CD4-positive, alpha-beta memory T cell (primary cell): ENCODE measurements at regions of chr6 and their contacts with region 1.

Region 1: DNA sequence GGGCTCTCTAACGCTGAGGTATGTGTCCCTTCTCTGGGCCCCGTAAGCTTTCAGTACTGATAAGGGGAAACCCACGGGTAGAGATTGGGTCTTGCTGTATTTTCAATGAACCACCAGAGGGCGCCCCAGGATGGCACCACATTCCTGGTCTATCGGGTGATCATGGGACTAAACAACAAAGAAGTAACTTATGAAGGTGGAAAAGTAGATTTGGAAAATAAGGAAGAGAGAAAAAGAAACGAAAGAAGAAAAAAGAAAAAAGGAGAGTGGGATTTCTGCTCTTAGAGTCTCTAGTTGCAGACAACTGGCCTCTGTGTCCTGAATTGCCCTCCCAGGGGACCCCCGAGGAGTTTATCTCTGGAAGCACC is 93.8 kb downstream of the GMPR start:
- DNase-seq: peak; percentile 77 to 86 (median 79)
- H3K4me3 ChIP-seq: no peak overlapping the region
- H3K4me3 Mint-ChIP-seq: no peak overlapping the region
- H3K27ac ChIP-seq: peak overlapping the region; percentile 50
- H3K27ac Mint-ChIP-seq: no peak overlapping the region
- H3K4me1 ChIP-seq: peaks cover 18% of the 10 kb centered on the region
- H3K4me1 Mint-ChIP-seq: peaks cover 0 to 20% (median 8%) of the 10 kb centered on the region in 4 donors
- H3K27me3 ChIP-seq: no peaks in the 10 kb centered on the region
- H3K27me3 Mint-ChIP-seq: no peaks in the 10 kb centered on the region

Region 2: GRCh38 chr6:16409531-16410441 is 77.6 kb after region 1 on chr6:
- CTCF ChIA-PET with region 1: interaction called, 21 read pairs
- POLR2A ChIA-PET with region 1: interaction called, 3 read pairs
- intact Hi-C with region 1: loop called (anchors 1 kb)
- DNase-seq: peak; percentile 45 to 78 (median 54)
- H3K4me3 ChIP-seq: no peak overlapping the region
- H3K4me3 Mint-ChIP-seq: peak overlapping the region in 7 of 8 donors; percentile 49 to 71 (median 68)
- H3K27ac ChIP-seq: no peak overlapping the region
- H3K27ac Mint-ChIP-seq: peak overlapping the region in 6 of 7 donors; percentile 7 to 78 (median 68)
- H3K4me1 ChIP-seq: peaks cover 22% of the 10 kb centered on the region
- H3K4me1 Mint-ChIP-seq: peaks cover 33 to 61% (median 48%) of the 10 kb centered on the region in 4 donors
- H3K27me3 ChIP-seq: no peaks in the 10 kb centered on the region
- H3K27me3 Mint-ChIP-seq: no peaks in the 10 kb centered on the region

Region 3: DNA sequence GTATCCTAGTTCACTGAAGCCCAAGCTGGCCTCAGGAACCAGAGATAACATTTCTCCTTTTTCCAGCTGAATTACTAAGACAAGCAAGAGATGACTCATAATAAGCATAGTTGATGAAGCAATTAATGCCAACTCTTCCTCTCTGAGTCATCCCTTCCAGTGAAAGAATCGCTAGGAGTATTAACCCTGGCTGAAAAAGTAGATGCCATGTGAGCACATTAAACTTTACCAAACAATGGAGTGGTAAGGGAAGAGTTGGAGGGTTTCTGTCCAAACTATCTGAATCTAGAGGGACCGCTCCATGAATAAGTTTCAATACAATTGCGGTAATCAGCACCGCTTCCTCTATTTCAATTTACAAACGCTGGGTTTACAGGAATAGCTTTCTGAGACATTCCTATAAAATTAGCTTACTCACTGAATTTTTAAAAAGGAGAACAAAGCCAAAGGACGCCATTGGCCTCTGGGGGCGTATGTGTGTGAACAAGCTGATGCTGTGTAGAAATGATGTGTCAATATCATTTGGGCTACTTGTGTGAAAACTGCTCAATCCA is 380.8 kb after region 1 on chr6:
- CTCF ChIA-PET with region 1: interaction called, 8 read pairs
- POLR2A ChIA-PET with region 1: no interaction called
- intact Hi-C with region 1: loop called (anchors 1 kb)
- DNase-seq: peak in 1 of 5 donors; percentile 62
- H3K4me3 ChIP-seq: peak overlapping the region; percentile 33 to 45
- H3K4me3 Mint-ChIP-seq: peak overlapping the region; percentile 70 to 89 (median 80)
- H3K27ac ChIP-seq: peak overlapping the region; percentile 67
- H3K27ac Mint-ChIP-seq: peak overlapping the region; percentile 74 to 95 (median 88)
- H3K4me1 ChIP-seq: peaks cover 36% of the 10 kb centered on the region
- H3K4me1 Mint-ChIP-seq: peaks cover 31 to 54% (median 43%) of the 10 kb centered on the region in 4 donors
- H3K27me3 ChIP-seq: no peaks in the 10 kb centered on the region
- H3K27me3 Mint-ChIP-seq: no peaks in the 10 kb centered on the region

Region 4: DNA sequence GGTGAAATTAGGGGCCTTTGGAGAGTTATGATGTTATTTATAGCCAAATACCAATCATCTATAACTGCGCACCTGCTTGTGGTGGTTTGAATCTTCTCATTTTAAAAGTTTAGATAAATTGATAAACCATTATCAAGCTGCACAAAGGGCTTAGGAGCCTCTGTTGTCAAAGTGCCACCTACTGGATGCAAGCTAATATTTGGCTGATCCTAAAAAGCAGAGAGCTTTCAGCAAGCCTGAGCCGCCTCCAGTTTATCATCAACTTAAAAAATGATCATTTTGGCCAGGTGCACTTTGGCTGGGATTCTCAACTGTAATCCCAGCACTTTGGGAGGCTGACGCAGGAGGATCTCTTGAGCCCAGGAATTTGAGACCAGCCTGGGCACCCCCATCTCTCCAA is 487.6 kb after region 1 on chr6:
- CTCF ChIA-PET with region 1: interaction called, 5 read pairs
- POLR2A ChIA-PET with region 1: no interaction called
- intact Hi-C with region 1: loop called (anchors 1 kb)
- DNase-seq: no peak
- H3K4me3 ChIP-seq: no peak overlapping the region
- H3K4me3 Mint-ChIP-seq: no peak overlapping the region
- H3K27ac ChIP-seq: no peak overlapping the region
- H3K27ac Mint-ChIP-seq: no peak overlapping the region
- H3K4me1 ChIP-seq: no peaks in the 10 kb centered on the region
- H3K4me1 Mint-ChIP-seq: no peaks in the 10 kb centered on the region
- H3K27me3 ChIP-seq: no peaks in the 10 kb centered on the region
- H3K27me3 Mint-ChIP-seq: peaks cover 6 to 11% of the 10 kb centered on the region in 2 donors

Region 5: DNA sequence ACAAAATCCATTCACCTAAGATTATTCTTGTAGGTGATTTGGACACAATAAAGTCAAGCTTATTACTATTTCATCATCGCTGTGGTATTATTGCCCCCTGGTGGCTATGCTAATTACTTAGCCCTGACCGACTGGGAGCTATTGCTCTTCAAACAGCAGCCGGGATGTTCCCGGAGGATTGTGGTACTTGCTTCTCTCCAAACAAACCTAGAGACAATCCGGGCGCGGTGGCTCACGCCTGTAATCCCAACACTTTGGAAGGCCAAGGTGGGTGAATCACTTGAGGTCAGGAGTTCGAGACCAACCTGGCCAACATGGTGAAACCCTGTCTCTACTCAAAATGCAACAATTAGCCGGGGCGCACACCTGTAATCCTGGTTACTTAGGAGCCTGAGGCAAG is 754.3 kb after region 1 on chr6:
- CTCF ChIA-PET with region 1: no interaction called
- POLR2A ChIA-PET with region 1: no interaction called
- intact Hi-C with region 1: loop called (anchors 5 kb)
- DNase-seq: peak in 4 of 5 donors; percentile 5 to 24 (median 10)
- H3K4me3 ChIP-seq: no peak overlapping the region
- H3K4me3 Mint-ChIP-seq: no peak overlapping the region
- H3K27ac ChIP-seq: no peak overlapping the region
- H3K27ac Mint-ChIP-seq: no peak overlapping the region
- H3K4me1 ChIP-seq: no peaks in the 10 kb centered on the region
- H3K4me1 Mint-ChIP-seq: no peaks in the 10 kb centered on the region
- H3K27me3 ChIP-seq: peaks cover 6% of the 10 kb centered on the region
- H3K27me3 Mint-ChIP-seq: peaks cover 7 to 14% of the 10 kb centered on the region in 2 donors